ENCODE measurements at regions of chr7 and their contacts with region 1.

Region 1: GRCh38 chr7:66557608-66558143 is 71.0 kb upstream of the KCTD7 start:
- DNase-seq: peak; percentile 76
- ATAC-seq: peak; percentile 92
- H3K4me3 ChIP-seq: no peak overlapping the region
- H3K4me3 Mint-ChIP-seq: no peak overlapping the region
- H3K27ac ChIP-seq: no peak overlapping the region
- H3K27ac Mint-ChIP-seq: peak overlapping the region; percentile 37
- H3K4me1 ChIP-seq: peaks cover 0 to 6% of the 10 kb centered on the region in 2 donors
- H3K4me1 Mint-ChIP-seq: peaks cover 4% of the 10 kb centered on the region
- H3K27me3 ChIP-seq: no peaks in the 10 kb centered on the region
- H3K27me3 Mint-ChIP-seq: no peaks in the 10 kb centered on the region
- CTCF ChIP-seq: peak; percentile 92

Region 2: GRCh38 chr7:66602161-66602560 is 44.5 kb after region 1 on chr7:
- CTCF ChIA-PET with region 1: no interaction called
- POLR2A ChIA-PET with region 1: no interaction called
- intact Hi-C with region 1: no loop called
- DNase-seq: no peak
- ATAC-seq: no peak
- H3K4me3 ChIP-seq: no peak overlapping the region
- H3K4me3 Mint-ChIP-seq: no peak overlapping the region
- H3K27ac ChIP-seq: no peak overlapping the region
- H3K27ac Mint-ChIP-seq: no peak overlapping the region
- H3K4me1 ChIP-seq: no peaks in the 10 kb centered on the region
- H3K4me1 Mint-ChIP-seq: no peaks in the 10 kb centered on the region
- H3K27me3 ChIP-seq: no peaks in the 10 kb centered on the region
- H3K27me3 Mint-ChIP-seq: no peaks in the 10 kb centered on the region
- CTCF ChIP-seq: no peak

Region 3: GRCh38 chr7:66758950-66759628 is 201.4 kb after region 1 on chr7:
- CTCF ChIA-PET with region 1: no interaction called
- POLR2A ChIA-PET with region 1: no interaction called
- intact Hi-C with region 1: loop called (anchors 10 kb)
- DNase-seq: no peak
- ATAC-seq: peak; percentile 51
- H3K4me3 ChIP-seq: no peak overlapping the region
- H3K4me3 Mint-ChIP-seq: no peak overlapping the region
- H3K27ac ChIP-seq: peak overlapping the region; percentile 10 to 49
- H3K27ac Mint-ChIP-seq: peak overlapping the region; percentile 74
- H3K4me1 ChIP-seq: peaks cover 16 to 23% of the 10 kb centered on the region in 2 donors
- H3K4me1 Mint-ChIP-seq: peaks cover 44% of the 10 kb centered on the region
- H3K27me3 ChIP-seq: no peaks in the 10 kb centered on the region
- H3K27me3 Mint-ChIP-seq: no peaks in the 10 kb centered on the region
- CTCF ChIP-seq: no peak

Region 4: GRCh38 chr7:66894463-66895080 is 336.9 kb after region 1 on chr7:
- CTCF ChIA-PET with region 1: interaction called, 3 read pairs
- POLR2A ChIA-PET with region 1: no interaction called
- intact Hi-C with region 1: loop called (anchors 1 kb)
- DNase-seq: peak; percentile 16
- ATAC-seq: no peak
- H3K4me3 ChIP-seq: no peak overlapping the region
- H3K4me3 Mint-ChIP-seq: no peak overlapping the region
- H3K27ac ChIP-seq: no peak overlapping the region
- H3K27ac Mint-ChIP-seq: no peak overlapping the region
- H3K4me1 ChIP-seq: no peaks in the 10 kb centered on the region
- H3K4me1 Mint-ChIP-seq: no peaks in the 10 kb centered on the region
- H3K27me3 ChIP-seq: no peaks in the 10 kb centered on the region
- H3K27me3 Mint-ChIP-seq: no peaks in the 10 kb centered on the region
- CTCF ChIP-seq: no peak